ENCODE measurements at regions of chr20 and their contacts with region 1.

Region 1: GRCh38 chr20:49668181-49668877 is 45.3 kb downstream of the B4GALT5 start:
- DNase-seq: peak; percentile 88
- H3K4me3 Mint-ChIP-seq: peak overlapping the region; percentile 34
- H3K27ac Mint-ChIP-seq: peak overlapping the region; percentile 38
- H3K4me1 Mint-ChIP-seq: peaks cover 39% of the 10 kb centered on the region
- H3K27me3 Mint-ChIP-seq: no peaks in the 10 kb centered on the region

Region 2: GRCh38 chr20:49620364-49621240 is 47.7 kb before region 1 on chr20:
- CTCF ChIA-PET with region 1: no interaction called
- POLR2A ChIA-PET with region 1: no interaction called
- intact Hi-C with region 1: loop called (anchors 2 kb)
- DNase-seq: peak; percentile 66
- H3K4me3 Mint-ChIP-seq: no peak overlapping the region
- H3K27ac Mint-ChIP-seq: no peak overlapping the region
- H3K4me1 Mint-ChIP-seq: peaks cover 5% of the 10 kb centered on the region
- H3K27me3 Mint-ChIP-seq: peaks cover 13% of the 10 kb centered on the region

Region 3: DNA sequence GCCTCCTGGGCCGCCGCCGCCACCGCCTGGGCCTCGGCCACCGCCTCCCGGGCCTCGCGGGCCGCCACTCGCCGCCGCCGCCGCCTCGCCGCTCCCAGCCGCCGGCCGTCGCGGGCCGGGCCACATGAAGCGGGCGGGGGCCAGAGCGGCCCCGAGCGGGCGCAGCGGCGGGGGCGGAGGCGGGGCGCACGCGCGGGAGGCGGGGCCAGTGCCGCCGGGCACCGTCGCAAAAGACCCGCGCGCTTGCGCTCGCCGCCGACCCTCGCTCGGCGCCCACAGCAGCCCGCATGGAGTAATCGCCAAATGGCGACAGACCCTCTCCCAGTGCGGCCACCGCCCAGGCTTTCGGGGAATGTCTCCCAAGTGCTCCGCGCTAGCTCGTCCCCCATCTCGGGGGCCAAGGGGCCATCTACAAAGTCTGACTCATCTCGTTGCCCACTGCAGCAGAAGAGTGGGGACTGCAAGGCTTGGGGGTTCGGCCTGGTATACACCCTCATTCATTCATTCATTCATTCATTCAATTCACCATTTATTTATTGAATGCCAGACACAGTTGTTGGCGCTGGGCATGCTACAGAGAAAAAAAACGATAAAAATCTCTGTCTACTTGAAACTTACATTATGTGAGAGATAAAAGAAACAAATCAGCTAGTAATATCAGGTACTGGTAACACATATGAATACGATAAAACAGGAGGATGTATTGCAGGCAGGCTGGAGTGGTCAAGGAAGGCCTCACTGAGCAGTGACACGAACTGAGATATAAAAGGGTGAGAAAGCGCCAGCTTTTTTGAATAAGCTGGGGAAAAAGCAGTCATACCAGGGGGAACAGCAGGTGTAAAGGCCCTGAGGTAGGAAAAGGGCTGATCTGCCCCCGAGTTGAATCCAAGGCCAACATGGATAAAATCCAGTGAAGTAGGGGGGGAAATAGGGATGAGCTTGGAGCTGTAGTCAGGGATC is 45.7 kb after region 1 on chr20 and contains the start of gene B4GALT5:
- CTCF ChIA-PET with region 1: interaction called, 7 read pairs
- POLR2A ChIA-PET with region 1: interaction called, 3 read pairs
- intact Hi-C with region 1: loop called (anchors 5 kb)
- DNase-seq: peak; percentile 69
- H3K4me3 Mint-ChIP-seq: peak within 1 kb of the TSS; percentile 86
- H3K27ac Mint-ChIP-seq: peak within 1 kb of the TSS; percentile 83
- H3K4me1 Mint-ChIP-seq: peaks cover 45% of the 10 kb centered on the region
- H3K27me3 Mint-ChIP-seq: no peaks in the 10 kb centered on the region
- total RNA-seq, gene B4GALT5: 20.9 to 21.4 TPM

Region 4: DNA sequence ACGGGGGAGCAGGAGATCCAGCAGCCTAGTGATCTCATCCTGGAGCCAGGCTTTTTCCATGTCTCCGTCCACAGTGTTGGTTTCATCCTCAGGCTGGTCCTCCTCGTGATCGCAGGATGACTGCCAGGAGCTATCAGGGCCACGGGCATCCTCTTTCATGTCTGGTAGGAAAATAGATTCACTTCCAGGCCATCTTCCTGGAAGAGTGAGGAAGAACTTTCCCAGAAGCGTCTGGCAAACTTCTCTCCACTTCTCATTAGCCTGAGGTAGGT is 129.0 kb after region 1 on chr20:
- CTCF ChIA-PET with region 1: no interaction called
- POLR2A ChIA-PET with region 1: no interaction called
- intact Hi-C with region 1: loop called (anchors 1 kb)
- DNase-seq: no peak
- H3K4me3 Mint-ChIP-seq: no peak overlapping the region
- H3K27ac Mint-ChIP-seq: no peak overlapping the region
- H3K4me1 Mint-ChIP-seq: peaks cover 21% of the 10 kb centered on the region
- H3K27me3 Mint-ChIP-seq: peaks cover 7% of the 10 kb centered on the region

Region 5: DNA sequence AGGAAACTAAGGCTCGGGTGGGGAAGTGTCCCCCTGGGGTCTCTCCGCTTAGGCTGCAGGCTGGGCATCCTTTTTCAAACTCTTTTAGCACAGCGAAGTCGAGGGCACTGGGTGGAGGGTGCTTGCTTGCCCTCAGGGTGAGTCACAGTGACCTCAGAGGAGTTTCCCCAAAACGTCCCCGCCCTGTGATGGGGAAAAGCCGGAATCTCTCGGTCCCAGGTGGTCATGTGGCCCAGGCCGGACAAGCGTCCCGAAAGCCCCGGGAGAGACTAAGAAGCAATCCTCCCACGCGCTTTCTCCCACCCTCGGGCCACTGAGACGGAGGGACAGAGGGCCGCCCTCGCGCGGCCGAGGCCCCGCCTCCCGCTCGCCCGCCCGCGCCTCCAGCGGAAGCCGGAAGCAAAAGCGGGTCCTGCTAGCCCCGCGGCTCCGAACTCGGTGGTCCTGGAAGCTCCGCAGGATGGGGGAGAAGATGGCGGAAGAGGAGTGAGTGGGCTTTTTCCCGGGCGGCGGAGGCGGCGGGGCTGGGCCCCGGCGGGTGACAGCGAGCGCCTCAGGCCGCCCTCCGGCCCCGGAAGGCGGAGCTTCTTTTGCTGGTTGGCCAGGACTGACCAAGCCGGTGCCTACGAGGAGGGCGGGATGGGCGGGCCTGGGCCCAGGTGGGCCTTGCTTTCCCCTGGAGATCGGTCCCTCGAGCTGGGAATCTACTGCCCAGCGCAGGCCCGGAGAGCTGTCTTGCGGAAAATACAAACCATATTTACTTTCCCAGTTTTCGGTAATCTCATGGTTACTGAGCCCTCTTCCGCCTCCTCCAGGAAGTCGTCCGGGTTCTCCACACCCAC is 144.4 kb after region 1 on chr20 and contains the start of gene SLC9A8:
- CTCF ChIA-PET with region 1: interaction called, 4 read pairs
- POLR2A ChIA-PET with region 1: interaction called, 11 read pairs
- intact Hi-C with region 1: no loop called
- DNase-seq: peak; percentile 92
- H3K4me3 Mint-ChIP-seq: peak within 1 kb of the TSS; percentile 89
- H3K27ac Mint-ChIP-seq: peak within 1 kb of the TSS; percentile 94
- H3K4me1 Mint-ChIP-seq: peaks cover 34% of the 10 kb centered on the region
- H3K27me3 Mint-ChIP-seq: no peaks in the 10 kb centered on the region
- total RNA-seq, gene SLC9A8: 11.5 to 13.0 TPM

Region 6: GRCh38 chr20:49846206-49846807 is 178.0 kb after region 1 on chr20:
- CTCF ChIA-PET with region 1: interaction called, 15 read pairs
- POLR2A ChIA-PET with region 1: no interaction called
- intact Hi-C with region 1: no loop called
- DNase-seq: peak; percentile 50
- H3K4me3 Mint-ChIP-seq: no peak overlapping the region
- H3K27ac Mint-ChIP-seq: no peak overlapping the region
- H3K4me1 Mint-ChIP-seq: no peaks in the 10 kb centered on the region
- H3K27me3 Mint-ChIP-seq: no peaks in the 10 kb centered on the region

Measured in activated CD4-positive, alpha-beta memory T cell treated with anti-CD3 and anti-CD28 coated beads for 36 hours (primary cell).